Left colon (tissue), 2 donors: ENCODE measurements at regions of chr13 and their contacts with region 1.

Region 1: GRCh38 chr13:78121459-78122348 is 203.1 kb upstream of the EDNRB start:
- DNase-seq: peak in 1 of 2 donors; percentile 17
- ATAC-seq: no peak

Region 2: GRCh38 chr13:77779552-77780272 is 342.0 kb before region 1 on chr13:
- intact Hi-C with region 1: loop called in 1 of 2 experiments (anchors 5 kb)
- DNase-seq: peak in 1 of 2 donors; percentile 30
- ATAC-seq: peak; percentile 64